Left cardiac atrium (tissue), 4 donors: ENCODE measurements at regions of chr3 and their contacts with region 1.

Region 1: GRCh38 chr3:4722103-4722502 is 229.0 kb downstream of the ITPR1 start:
- DNase-seq: peak; percentile 62
- ATAC-seq: peak; percentile 70 to 78

Region 2: GRCh38 chr3:4826237-4827100 is 104.4 kb after region 1 on chr3:
- intact Hi-C with region 1: loop called in 1 of 2 experiments (anchors 2 kb)
- DNase-seq: peak; percentile 92
- ATAC-seq: peak; percentile 82 to 85

Region 3: DNA sequence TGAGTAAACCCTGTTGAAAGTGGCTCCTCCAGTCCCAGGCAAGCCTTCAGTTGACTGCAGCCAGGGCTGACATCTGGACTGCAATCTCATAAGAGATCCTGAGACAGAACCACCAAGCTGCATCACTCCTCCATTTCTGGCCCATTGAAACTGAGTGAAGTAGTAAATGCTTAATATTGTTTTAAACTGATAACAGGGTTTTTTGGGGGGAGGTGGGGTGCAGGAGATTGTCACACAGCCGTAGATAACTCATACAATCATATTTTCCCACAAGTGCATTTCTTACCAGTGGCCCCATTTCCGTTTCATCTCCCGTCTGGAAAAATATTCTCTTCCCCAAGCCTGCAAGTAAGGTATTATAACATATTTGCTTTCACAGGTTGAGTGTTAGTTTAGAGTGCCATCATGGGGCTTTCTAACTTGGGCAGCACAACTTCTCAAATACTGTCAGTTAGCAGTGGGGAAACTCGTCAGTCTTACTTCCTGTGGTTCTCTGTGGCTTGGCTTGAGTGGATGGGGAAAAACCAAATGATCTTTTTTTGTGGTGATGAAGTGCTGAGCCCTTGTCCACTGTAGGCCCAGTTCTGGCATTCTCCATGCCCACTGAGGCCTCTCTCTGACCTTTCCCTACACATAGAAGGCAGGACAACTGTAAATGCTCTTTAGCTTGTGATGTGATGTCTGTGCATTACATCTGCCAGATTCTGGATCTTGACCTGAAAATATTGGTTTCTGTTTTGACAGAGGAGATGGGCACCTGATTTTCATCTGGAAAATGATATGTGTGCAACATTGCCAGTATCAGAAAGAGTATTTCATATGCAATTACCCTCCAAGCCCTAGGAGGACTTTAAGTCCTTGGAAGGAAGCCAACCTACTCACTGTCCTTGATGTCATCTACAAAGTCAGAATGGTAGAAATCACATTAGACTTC is 167.1 kb after region 1 on chr3:
- intact Hi-C with region 1: no loop called
- DNase-seq: no peak
- ATAC-seq: peak in 1 of 2 donors; percentile 57

Region 4: GRCh38 chr3:4986782-4987537 is 264.9 kb after region 1 on chr3:
- intact Hi-C with region 1: loop called in 1 of 2 experiments (anchors 10 kb)
- DNase-seq: peak; percentile 99
- ATAC-seq: peak; percentile 88 to 89